Calu3 (cell line): ENCODE measurements at regions of chr2 and their contacts with region 1.

Region 1: DNA sequence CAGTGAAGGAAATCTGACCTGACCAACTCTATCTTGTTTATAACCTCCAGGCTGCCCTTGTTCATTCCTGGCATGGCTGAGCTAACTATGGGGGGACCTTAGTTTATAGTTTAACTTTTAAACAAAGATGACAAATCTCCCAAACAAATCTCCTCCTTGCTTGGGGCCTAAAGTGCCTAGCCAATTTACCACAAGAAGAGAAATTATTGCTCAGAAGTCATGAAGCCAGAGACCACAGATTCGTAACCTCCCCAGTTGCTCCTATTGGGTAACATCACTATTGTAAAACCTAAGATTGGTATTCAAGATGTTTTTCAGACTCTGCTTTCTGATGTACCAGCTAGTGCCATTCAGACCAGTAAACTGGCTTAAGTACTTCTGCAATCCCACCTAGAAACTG is 649.4 kb upstream of the SLC8A1 start:
- DNase-seq: no peak
- H3K4me3 Mint-ChIP-seq: no peak overlapping the region
- H3K27ac Mint-ChIP-seq: no peak overlapping the region
- H3K4me1 Mint-ChIP-seq: no peaks in the 10 kb centered on the region
- H3K27me3 Mint-ChIP-seq: no peaks in the 10 kb centered on the region
- CTCF ChIP-seq: no peak

Region 2: DNA sequence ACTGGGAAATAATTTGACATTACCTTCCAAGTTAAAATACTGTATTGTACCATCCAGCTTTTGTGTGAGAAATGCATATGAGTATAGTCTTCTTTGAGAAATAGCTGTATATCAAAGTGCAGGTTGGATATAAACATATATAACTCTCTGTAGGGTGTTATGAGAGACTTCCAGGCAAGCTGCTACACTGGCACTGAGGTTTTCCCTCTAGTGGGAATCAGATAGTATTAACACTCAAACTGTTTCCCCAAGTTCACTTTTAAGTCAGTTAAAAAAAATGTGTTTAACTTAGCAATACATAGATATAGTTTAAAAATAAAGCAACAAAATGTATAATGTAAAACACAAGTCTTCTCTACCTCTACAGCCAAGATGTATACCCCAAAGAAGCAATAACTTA is 281.0 kb before region 1 on chr2:
- CTCF ChIA-PET with region 1: no interaction called
- intact Hi-C with region 1: no loop called
- DNase-seq: no peak
- H3K4me3 Mint-ChIP-seq: no peak overlapping the region
- H3K27ac Mint-ChIP-seq: no peak overlapping the region
- H3K4me1 Mint-ChIP-seq: no peaks in the 10 kb centered on the region
- H3K27me3 Mint-ChIP-seq: no peaks in the 10 kb centered on the region
- CTCF ChIP-seq: no peak

Region 3: DNA sequence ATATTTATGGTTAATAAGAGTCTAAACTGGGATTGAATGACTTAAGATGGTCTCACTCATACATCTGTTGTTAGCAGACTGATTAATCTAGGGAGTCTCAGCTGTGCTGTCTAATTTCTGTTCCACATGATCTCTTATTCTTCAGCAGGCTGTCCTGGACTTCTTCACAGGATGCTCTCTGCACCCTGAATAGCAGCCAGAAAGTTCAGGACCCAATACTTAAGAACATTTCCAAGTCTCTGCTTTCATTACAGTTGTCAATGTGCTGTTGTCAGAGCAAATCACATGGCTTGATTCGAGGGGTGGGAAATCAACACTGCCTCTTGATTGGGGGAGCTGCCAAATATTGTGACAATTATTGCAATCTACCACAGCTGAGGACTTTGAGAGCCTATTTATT is 22.3 kb before region 1 on chr2:
- CTCF ChIA-PET with region 1: no interaction called
- intact Hi-C with region 1: loop called (anchors 2 kb)
- DNase-seq: no peak
- H3K4me3 Mint-ChIP-seq: no peak overlapping the region
- H3K27ac Mint-ChIP-seq: no peak overlapping the region
- H3K4me1 Mint-ChIP-seq: peaks cover 5% of the 10 kb centered on the region
- H3K27me3 Mint-ChIP-seq: no peaks in the 10 kb centered on the region
- CTCF ChIP-seq: no peak